ENCODE measurements at regions of chr12 and their contacts with region 1.

Region 1: GRCh38 chr12:56987551-56988053 is 18.7 kb downstream of the ZBTB39 start:
- DNase-seq: peak; percentile 81
- ATAC-seq: peak; percentile 77
- H3K4me3 Mint-ChIP-seq: no peak overlapping the region
- H3K27ac Mint-ChIP-seq: no peak overlapping the region
- H3K4me1 Mint-ChIP-seq: peaks cover 12% of the 10 kb centered on the region
- H3K27me3 Mint-ChIP-seq: peaks cover 1% of the 10 kb centered on the region
- CTCF ChIP-seq: peak; percentile 97

Region 2: DNA sequence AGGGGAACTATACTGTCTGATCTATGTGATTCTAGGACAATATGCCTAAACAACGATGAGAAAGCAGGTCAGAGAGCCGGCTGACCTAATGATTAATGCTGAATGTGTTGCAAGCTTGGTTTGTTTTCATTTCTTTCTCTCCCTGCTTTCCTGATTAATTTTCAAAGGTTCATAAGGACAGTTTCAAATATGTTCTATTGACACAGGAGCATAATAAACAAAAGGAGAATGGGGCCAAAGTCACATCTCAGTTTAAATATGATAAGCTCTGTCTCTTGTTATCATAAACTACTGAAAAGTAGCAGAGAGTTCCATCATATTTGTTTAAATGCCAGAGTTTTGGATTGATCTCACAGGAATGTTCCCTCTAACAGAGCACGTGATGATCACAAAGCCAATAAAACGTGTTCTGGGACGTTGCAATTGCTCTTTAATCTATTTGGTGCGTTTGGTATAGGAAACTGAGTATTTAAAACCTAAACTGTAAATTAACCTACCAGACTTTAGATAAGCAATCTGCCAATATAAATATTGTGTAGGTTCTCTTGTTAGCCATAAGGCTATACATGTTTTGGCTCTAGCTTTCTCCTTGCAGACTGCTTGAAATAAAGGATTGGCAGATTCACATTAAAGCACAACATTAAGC is 228.2 kb before region 1 on chr12:
- CTCF ChIA-PET with region 1: interaction called, 107 read pairs
- POLR2A ChIA-PET with region 1: no interaction called
- intact Hi-C with region 1: loop called (anchors 2 kb)
- DNase-seq: no peak
- ATAC-seq: no peak
- H3K4me3 Mint-ChIP-seq: no peak overlapping the region
- H3K27ac Mint-ChIP-seq: no peak overlapping the region
- H3K4me1 Mint-ChIP-seq: peaks cover 9% of the 10 kb centered on the region
- H3K27me3 Mint-ChIP-seq: no peaks in the 10 kb centered on the region
- CTCF ChIP-seq: no peak

Region 3: GRCh38 chr12:56839915-56840325 is 147.7 kb before region 1 on chr12:
- CTCF ChIA-PET with region 1: interaction called, 19 read pairs
- POLR2A ChIA-PET with region 1: no interaction called
- intact Hi-C with region 1: loop called (anchors 10 kb)
- DNase-seq: peak; percentile 64
- ATAC-seq: peak; percentile 38
- H3K4me3 Mint-ChIP-seq: no peak overlapping the region
- H3K27ac Mint-ChIP-seq: no peak overlapping the region
- H3K4me1 Mint-ChIP-seq: peaks cover 15% of the 10 kb centered on the region
- H3K27me3 Mint-ChIP-seq: no peaks in the 10 kb centered on the region
- CTCF ChIP-seq: peak; percentile 40

Region 4: DNA sequence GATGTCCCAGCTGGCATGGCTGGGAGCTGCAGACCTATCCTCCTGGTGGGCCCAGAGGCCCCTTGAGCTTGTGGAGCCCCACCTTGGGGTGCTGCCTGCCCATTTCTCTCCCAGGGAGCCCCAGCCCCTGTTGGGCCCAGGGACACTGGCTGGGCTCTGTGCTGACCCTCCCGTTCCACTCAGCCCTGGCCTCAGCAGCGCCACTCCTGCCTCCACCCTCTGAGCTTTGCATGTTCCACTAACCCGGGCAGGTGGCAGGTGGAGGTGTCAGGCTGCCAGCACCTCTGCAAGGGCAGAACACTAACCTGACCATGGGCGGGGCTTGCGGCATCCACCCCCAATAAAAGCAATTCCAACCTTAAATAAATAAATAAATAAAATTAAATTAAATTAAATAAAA is 1633.5 kb after region 1 on chr12:
- CTCF ChIA-PET with region 1: no interaction called
- POLR2A ChIA-PET with region 1: no interaction called
- intact Hi-C with region 1: no loop called
- DNase-seq: no peak
- ATAC-seq: no peak
- H3K4me3 Mint-ChIP-seq: no peak overlapping the region
- H3K27ac Mint-ChIP-seq: no peak overlapping the region
- H3K4me1 Mint-ChIP-seq: no peaks in the 10 kb centered on the region
- H3K27me3 Mint-ChIP-seq: no peaks in the 10 kb centered on the region
- CTCF ChIP-seq: no peak

Measured in activated CD8-positive, alpha-beta T cell treated with anti-CD3 and anti-CD28 coated beads for 36 hours (primary cell).